Activated naive CD4-positive, alpha-beta T cell treated with anti-CD3 and anti-CD28 coated beads, Interleukin-2, amount 10 ng/mL, durations not matched to agents 7 days and 5 days (primary cell): ENCODE measurements at regions of chr17 and their contacts with region 1.

Region 1: GRCh38 chr17:44672479-44673093 is 16.3 kb downstream of the MEIOC start:
- DNase-seq: no peak
- H3K4me3 Mint-ChIP-seq: no peak overlapping the region
- H3K27ac Mint-ChIP-seq: no peak overlapping the region
- H3K4me1 Mint-ChIP-seq: no peaks in the 10 kb centered on the region
- H3K27me3 Mint-ChIP-seq: peaks cover 5% of the 10 kb centered on the region

Region 2: DNA sequence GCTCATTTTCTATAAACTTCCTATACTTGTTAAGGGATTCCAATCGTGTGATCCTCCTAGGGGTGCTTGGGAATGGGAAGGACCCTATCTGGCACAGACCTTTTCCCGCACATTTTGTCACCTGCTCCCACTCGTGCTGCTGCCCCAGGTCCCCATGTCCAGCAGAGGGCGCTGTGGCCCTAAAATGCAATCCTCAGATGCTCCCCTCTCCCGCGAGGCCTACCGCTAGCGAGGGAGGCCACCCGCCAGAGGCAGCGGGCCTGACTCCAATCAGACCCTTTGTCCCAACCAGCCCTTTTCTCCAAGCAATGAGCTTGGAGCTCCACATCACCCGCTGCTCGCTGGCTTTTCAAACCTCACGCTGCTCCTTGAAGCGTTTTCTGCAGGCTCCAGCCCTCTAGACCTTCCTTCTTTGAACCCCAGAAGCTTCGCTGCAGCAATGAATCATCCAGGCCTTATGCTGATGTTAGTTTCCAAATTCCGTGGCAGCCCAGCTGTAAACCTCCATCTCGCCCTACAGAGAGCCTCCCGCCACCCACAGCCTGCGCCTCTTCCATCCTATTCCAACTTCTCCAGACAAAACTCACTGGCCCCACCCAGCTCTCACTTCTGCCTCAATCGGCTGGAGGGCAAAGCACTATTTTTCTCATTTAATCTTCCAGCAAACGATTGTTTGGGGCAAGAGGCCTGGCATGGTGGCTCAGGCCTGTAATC is 138.9 kb before region 1 on chr17:
- CTCF ChIA-PET with region 1: interaction called, 12 read pairs
- DNase-seq: peak; percentile 90
- H3K4me3 Mint-ChIP-seq: no peak overlapping the region
- H3K27ac Mint-ChIP-seq: no peak overlapping the region
- H3K4me1 Mint-ChIP-seq: peaks cover 5% of the 10 kb centered on the region
- H3K27me3 Mint-ChIP-seq: peaks cover 28% of the 10 kb centered on the region